CD8-positive, alpha-beta memory T cell (primary cell): ENCODE measurements at regions of chr17 and their contacts with region 1.

Region 1: DNA sequence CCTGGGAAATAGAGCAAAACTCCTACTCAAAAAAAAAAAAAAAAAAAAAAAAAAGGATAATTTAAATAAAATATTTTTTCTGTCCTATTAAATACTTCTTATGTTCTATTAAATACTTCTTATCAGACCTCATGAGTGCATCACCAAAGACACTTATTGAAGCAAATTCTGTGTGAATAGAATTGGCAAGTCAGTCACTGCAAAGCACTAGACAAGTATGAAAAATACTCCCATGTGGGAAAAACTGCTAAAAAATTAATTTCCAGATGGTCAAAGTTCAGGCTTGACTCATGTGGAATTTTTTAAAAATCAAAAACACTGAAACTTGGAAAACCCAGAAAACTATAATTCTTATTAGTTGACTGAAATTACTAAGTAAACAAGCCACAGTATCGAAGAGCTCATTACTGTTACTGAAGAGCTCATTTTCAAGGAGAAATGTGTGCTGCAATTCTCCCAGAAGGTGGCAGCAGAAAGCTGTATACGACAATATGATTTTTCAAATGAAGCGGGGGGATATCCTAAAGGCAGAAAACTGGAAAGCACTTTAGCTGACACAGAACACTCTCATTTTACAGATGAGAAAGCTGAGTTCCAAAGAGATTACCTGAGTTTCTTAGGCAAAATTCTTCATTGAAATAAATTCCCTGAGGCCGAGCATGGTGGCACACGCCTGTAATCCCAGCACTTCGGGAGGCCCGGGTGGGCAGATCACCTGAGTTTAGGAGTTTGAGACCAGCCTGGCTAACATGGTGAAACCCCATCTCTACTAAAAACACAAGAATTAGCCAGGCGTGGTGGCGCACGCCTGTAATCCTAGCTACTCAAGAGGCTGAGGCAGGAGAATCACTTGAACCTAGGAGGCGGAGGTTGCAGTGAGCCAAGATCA is 15.9 kb upstream of the FBXO47 start:
- DNase-seq: peak in 4 of 5 donors; percentile 27 to 62 (median 58)
- H3K4me3 ChIP-seq: no peak overlapping the region
- H3K4me3 Mint-ChIP-seq: no peak overlapping the region
- H3K27ac ChIP-seq: no peak overlapping the region
- H3K27ac Mint-ChIP-seq: no peak overlapping the region
- H3K4me1 ChIP-seq: no peaks in the 10 kb centered on the region
- H3K4me1 Mint-ChIP-seq: peaks cover 0 to 5% (median 0%) of the 10 kb centered on the region in 3 donors
- H3K27me3 ChIP-seq: no peaks in the 10 kb centered on the region
- H3K27me3 Mint-ChIP-seq: no peaks in the 10 kb centered on the region

Region 2: GRCh38 chr17:38752119-38752929 is 230.8 kb before region 1 on chr17 and contains the start of gene PSMB3:
- CTCF ChIA-PET with region 1: no interaction called
- POLR2A ChIA-PET with region 1: no interaction called
- DNase-seq: peak; percentile 91 to 97 (median 96)
- H3K4me3 ChIP-seq: peak within 1 kb of the TSS; percentile 98
- H3K4me3 Mint-ChIP-seq: peak within 1 kb of the TSS; percentile 88 to 100 (median 98)
- H3K27ac ChIP-seq: peak within 1 kb of the TSS; percentile 91
- H3K27ac Mint-ChIP-seq: peak within 1 kb of the TSS; percentile 89 to 99 (median 97)
- H3K4me1 ChIP-seq: peaks cover 55% of the 10 kb centered on the region
- H3K4me1 Mint-ChIP-seq: peaks cover 46 to 72% (median 52%) of the 10 kb centered on the region in 3 donors
- H3K27me3 ChIP-seq: peaks cover 29% of the 10 kb centered on the region
- H3K27me3 Mint-ChIP-seq: peaks cover 24 to 29% of the 10 kb centered on the region in 2 donors
- total RNA-seq, gene PSMB3: 317 to 323 TPM

Region 3: DNA sequence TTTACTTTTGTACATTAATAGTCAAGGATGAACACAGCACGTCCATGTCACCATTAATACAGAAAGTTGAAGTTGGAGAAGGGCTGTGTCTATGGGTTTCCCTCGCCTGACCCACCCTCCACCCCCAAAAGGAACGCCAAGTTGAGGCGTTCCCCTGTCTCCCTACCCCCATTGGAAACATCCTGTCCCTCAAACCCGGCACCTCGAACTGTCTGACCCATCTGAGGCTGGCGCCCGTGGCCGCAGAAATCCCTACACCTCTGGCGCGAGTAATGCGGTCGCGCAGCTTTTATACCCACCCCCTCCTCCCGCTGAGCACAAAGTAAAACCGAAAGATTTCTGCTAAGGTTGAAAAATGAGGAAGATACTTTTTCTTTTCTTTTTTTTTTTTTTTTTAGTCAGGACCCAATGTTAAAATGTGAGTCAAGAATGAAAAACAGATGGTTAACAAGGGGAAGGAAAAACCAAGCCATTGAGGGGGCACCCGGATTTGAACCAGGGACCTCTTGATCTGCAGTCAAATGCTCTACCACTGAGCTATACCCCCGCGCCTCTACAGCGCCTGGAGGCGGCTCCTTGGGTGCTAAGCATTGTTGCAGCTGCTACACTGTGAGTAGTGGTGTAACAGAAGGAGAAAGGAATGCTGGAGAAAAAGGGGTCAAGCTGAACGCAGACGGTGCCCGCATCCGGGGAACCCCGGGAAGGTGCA is 114.1 kb before region 1 on chr17:
- CTCF ChIA-PET with region 1: interaction called, 14 read pairs
- POLR2A ChIA-PET with region 1: interaction called, 3 read pairs
- DNase-seq: peak; percentile 71 to 91 (median 80)
- H3K4me3 ChIP-seq: peak overlapping the region; percentile 98
- H3K4me3 Mint-ChIP-seq: peak overlapping the region; percentile 94 to 100 (median 98)
- H3K27ac ChIP-seq: peak overlapping the region; percentile 87
- H3K27ac Mint-ChIP-seq: peak overlapping the region; percentile 89 to 99 (median 96)
- H3K4me1 ChIP-seq: peaks cover 42% of the 10 kb centered on the region
- H3K4me1 Mint-ChIP-seq: peaks cover 46 to 47% (median 47%) of the 10 kb centered on the region in 3 donors
- H3K27me3 ChIP-seq: no peaks in the 10 kb centered on the region
- H3K27me3 Mint-ChIP-seq: peaks cover 0 to 12% of the 10 kb centered on the region in 2 donors

Region 4: GRCh38 chr17:38943607-38944006 is 39.5 kb before region 1 on chr17:
- CTCF ChIA-PET with region 1: no interaction called
- POLR2A ChIA-PET with region 1: no interaction called
- DNase-seq: no peak
- H3K4me3 ChIP-seq: no peak overlapping the region
- H3K4me3 Mint-ChIP-seq: no peak overlapping the region
- H3K27ac ChIP-seq: no peak overlapping the region
- H3K27ac Mint-ChIP-seq: no peak overlapping the region
- H3K4me1 ChIP-seq: no peaks in the 10 kb centered on the region
- H3K4me1 Mint-ChIP-seq: peaks cover 0 to 2% (median 0%) of the 10 kb centered on the region in 3 donors
- H3K27me3 ChIP-seq: no peaks in the 10 kb centered on the region
- H3K27me3 Mint-ChIP-seq: no peaks in the 10 kb centered on the region

Region 5: GRCh38 chr17:38967290-38967738 is 15.8 kb before region 1 on chr17 and contains the start of gene FBXO47:
- CTCF ChIA-PET with region 1: interaction called, 14 read pairs
- POLR2A ChIA-PET with region 1: no interaction called
- DNase-seq: peak; percentile 68 to 88 (median 79)
- H3K4me3 ChIP-seq: no peak within 1 kb of the TSS
- H3K4me3 Mint-ChIP-seq: peak within 1 kb of the TSS; percentile 51 to 87 (median 81)
- H3K27ac ChIP-seq: no peak within 1 kb of the TSS
- H3K27ac Mint-ChIP-seq: peak within 1 kb of the TSS in 7 of 8 donors; percentile 74 to 95 (median 86)
- H3K4me1 ChIP-seq: peaks cover 6% of the 10 kb centered on the region
- H3K4me1 Mint-ChIP-seq: peaks cover 6 to 16% (median 7%) of the 10 kb centered on the region in 3 donors
- H3K27me3 ChIP-seq: no peaks in the 10 kb centered on the region
- H3K27me3 Mint-ChIP-seq: peaks cover 0 to 2% of the 10 kb centered on the region in 2 donors
- total RNA-seq, gene FBXO47: not detected

Region 6: GRCh38 chr17:39092692-39093230 is 109.7 kb after region 1 on chr17:
- CTCF ChIA-PET with region 1: interaction called, 17 read pairs
- POLR2A ChIA-PET with region 1: no interaction called
- DNase-seq: peak in 2 of 5 donors; percentile 21 to 61
- H3K4me3 ChIP-seq: peak overlapping the region; percentile 49
- H3K4me3 Mint-ChIP-seq: peak overlapping the region; percentile 77 to 93 (median 82)
- H3K27ac ChIP-seq: no peak overlapping the region
- H3K27ac Mint-ChIP-seq: peak overlapping the region; percentile 88 to 99 (median 94)
- H3K4me1 ChIP-seq: peaks cover 86% of the 10 kb centered on the region
- H3K4me1 Mint-ChIP-seq: peaks cover 62 to 78% (median 70%) of the 10 kb centered on the region in 3 donors
- H3K27me3 ChIP-seq: no peaks in the 10 kb centered on the region
- H3K27me3 Mint-ChIP-seq: no peaks in the 10 kb centered on the region

Region 7: DNA sequence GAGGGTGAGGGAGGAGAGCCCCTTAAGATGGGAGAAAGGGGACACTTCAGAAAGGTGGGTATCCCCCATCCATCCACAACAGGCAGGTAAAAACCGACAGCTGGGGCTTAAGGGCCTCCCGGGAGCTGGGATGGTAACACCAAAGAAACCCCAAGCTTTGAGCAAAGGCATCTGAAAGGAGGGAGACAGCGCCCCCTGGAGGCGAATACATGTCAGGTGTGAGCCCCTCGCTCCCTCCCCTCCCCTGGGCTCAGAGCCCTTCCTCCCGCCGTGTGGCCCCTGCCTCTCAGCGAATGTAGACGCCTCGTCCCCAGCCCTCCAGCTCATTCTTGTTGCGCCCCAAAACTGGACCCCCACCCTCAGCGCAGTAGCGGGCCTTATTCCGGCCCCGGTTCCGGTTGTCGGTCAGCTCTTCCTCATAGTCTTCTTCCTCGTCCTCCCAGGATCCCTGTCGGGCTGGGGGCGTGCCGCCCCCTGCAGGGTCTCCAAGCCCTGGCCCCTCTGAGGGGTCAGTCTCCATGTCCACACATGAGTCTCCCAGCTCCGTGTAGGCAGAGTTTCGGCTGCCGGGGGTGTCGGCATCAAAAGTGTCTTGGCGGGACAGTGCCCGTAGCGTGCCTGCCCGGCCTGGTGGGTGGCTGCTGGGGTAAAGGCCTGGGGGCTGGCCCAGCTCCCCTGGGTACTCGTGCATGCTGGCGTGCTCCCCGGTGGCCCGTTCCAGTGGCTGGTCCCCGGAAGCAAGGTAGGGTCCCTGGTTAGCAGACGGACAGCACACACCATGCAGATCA is 192.0 kb after region 1 on chr17:
- CTCF ChIA-PET with region 1: interaction called, 110 read pairs
- POLR2A ChIA-PET with region 1: no interaction called
- DNase-seq: peak; percentile 67 to 86 (median 72)
- H3K4me3 ChIP-seq: no peak overlapping the region
- H3K4me3 Mint-ChIP-seq: no peak overlapping the region
- H3K27ac ChIP-seq: no peak overlapping the region
- H3K27ac Mint-ChIP-seq: peak overlapping the region in 3 of 8 donors; percentile 23 to 86 (median 46)
- H3K4me1 ChIP-seq: peaks cover 5% of the 10 kb centered on the region
- H3K4me1 Mint-ChIP-seq: peaks cover 7 to 24% (median 16%) of the 10 kb centered on the region in 3 donors
- H3K27me3 ChIP-seq: no peaks in the 10 kb centered on the region
- H3K27me3 Mint-ChIP-seq: peaks cover 0 to 5% of the 10 kb centered on the region in 2 donors

Region 8: DNA sequence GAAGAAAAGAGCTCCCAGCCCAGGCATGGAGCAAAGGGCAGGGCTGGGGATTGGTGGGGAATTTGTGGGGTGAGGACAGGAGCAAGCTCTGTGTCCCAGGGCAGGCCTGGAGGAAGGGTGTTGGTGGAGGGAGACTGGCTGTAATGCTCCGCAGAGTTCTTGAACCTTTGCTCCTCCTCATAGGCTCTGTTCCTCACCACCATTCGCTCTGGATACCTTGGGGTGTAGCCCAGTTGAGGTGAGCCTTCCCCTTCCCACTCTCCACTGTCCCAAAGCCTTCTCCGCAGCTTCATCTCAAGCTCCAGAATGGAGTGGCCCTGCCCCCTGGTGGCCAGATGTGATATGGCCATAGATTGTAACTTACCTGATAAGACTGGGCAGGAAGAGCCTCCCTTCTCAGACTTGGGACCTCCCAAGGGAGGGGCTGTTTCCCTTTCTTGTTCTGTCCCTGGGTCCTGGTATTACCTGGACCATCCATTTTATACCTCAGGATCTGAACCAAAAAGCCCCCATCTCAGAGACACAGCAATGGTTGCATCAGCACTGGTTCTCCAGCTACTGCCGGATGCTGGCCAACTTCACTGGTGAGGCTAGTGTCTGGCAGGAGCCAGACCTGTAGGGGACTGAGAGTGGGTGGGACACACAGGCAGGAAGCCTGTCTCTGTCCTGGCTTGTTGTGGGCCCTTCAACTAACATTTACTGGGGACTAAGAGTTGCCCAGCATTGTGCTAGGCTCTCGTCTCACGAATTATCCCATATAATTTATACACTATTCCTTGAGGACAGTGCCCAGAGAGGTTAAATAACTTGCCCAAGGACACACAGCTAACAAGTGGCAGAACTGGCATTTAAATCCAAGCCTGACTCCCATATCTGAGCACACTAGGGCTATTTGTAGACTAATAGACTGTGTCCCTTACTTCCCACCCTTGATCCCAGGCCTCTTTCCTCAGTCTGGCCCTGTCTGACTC is 261.8 kb after region 1 on chr17:
- CTCF ChIA-PET with region 1: interaction called, 29 read pairs
- POLR2A ChIA-PET with region 1: no interaction called
- DNase-seq: peak; percentile 72 to 88 (median 81)
- H3K4me3 ChIP-seq: no peak overlapping the region
- H3K4me3 Mint-ChIP-seq: peak overlapping the region in 4 of 7 donors; percentile 41 to 55 (median 46)
- H3K27ac ChIP-seq: no peak overlapping the region
- H3K27ac Mint-ChIP-seq: peak overlapping the region in 7 of 8 donors; percentile 38 to 90 (median 54)
- H3K4me1 ChIP-seq: peaks cover 9% of the 10 kb centered on the region
- H3K4me1 Mint-ChIP-seq: peaks cover 9 to 14% (median 11%) of the 10 kb centered on the region in 3 donors
- H3K27me3 ChIP-seq: no peaks in the 10 kb centered on the region
- H3K27me3 Mint-ChIP-seq: peaks cover 2 to 7% of the 10 kb centered on the region in 2 donors